GM13977 (cell line): ENCODE measurements at regions of chr10 and their contacts with region 1.

Region 1: DNA sequence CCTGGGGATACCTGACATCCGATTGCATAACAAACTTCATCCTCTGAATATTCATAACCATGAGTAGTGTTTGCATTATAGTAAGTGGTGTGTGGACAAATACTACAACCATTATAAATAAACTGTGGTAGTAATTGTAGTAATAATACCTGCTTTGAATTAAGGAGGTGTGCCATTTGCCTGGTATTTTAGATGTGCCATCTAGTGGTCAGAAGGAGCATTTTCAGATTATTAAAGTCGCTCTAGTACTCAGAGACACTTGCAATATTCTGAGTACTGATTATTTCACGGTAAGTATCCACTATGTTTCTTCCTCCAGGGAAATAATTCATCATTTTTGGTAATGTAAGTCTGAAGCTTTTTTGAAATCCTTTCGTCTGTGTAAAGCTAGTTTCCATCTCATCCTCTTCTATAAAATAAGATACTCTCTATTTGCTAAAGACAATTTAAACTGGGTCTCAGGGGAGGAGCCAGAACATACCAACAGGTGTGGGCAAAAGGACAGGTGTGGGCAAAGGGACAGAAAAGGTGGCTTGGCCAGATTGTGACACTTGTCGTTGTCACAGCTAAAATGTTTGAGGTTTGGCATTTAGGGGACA is 115.3 kb upstream of the WDR11 start:
- DNase-seq: peak; percentile 38
- CTCF ChIP-seq: peak; percentile 62

Region 2: GRCh38 chr10:120423431-120424197 is 312.3 kb before region 1 on chr10:
- in situ Hi-C with region 1: loop called (anchors 25 kb)
- DNase-seq: peak; percentile 57
- CTCF ChIP-seq: peak; percentile 97

Region 3: GRCh38 chr10:121231079-121231478 is 495.2 kb after region 1 on chr10:
- in situ Hi-C with region 1: no loop called
- DNase-seq: no peak
- CTCF ChIP-seq: no peak